Calu3 (cell line): ENCODE measurements at regions of chr6 and their contacts with region 1.

Region 1: DNA sequence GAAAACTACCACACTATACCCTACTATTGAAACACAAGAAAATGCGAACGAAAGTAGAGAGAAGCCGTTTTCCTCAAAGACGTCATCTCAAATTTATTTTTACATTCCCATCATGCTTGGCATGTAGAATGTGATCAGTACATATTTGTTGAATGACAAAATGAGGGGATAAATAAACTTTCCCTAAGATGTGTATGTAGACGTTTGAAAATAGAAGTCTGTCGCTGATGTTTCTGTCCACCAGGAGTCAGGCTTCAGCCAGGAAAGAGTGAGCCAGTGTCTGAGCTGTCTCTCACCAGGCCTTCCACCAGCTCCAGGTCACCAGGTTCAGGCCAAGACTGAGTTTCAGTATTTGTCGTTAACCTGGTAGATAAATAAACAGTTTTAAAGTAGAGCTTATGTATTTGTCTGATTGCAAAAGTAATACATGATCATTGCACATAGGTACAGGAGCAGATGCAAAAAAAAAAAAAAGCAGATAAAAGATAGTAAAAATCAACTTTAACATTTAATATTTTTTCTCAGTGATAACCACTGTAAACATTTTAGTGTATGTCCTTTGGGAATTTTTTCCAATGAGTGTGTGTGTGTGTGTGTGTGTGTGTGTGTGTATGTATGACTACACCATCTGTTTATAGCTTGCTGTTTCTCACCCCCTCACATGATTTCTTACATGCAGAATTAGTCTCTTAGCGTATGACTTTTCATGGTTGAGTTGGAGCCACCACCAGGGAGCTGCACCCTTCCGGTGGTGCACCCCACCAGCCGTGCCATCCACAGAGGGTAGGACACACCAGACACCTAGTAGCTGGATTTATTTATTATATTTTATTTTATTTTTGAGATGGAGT is 26.2 kb downstream of the WRNIP1 start:
- DNase-seq: peak; percentile 67
- H3K4me3 Mint-ChIP-seq: no peak overlapping the region
- H3K27ac Mint-ChIP-seq: peak overlapping the region; percentile 53
- H3K4me1 Mint-ChIP-seq: peaks cover 17% of the 10 kb centered on the region
- H3K27me3 Mint-ChIP-seq: no peaks in the 10 kb centered on the region
- CTCF ChIP-seq: peak; percentile 50

Region 2: GRCh38 chr6:2841264-2842138 is 50.2 kb after region 1 on chr6 and contains the start of gene SERPINB1:
- CTCF ChIA-PET with region 1: interaction called, 21 read pairs
- intact Hi-C with region 1: loop called (anchors 1 kb)
- DNase-seq: peak; percentile 87
- H3K4me3 Mint-ChIP-seq: peak within 1 kb of the TSS; percentile 91
- H3K27ac Mint-ChIP-seq: peak within 1 kb of the TSS; percentile 99
- H3K4me1 Mint-ChIP-seq: peaks cover 15% of the 10 kb centered on the region
- H3K27me3 Mint-ChIP-seq: no peaks in the 10 kb centered on the region
- CTCF ChIP-seq: no peak
- total RNA-seq, gene SERPINB1: 56.3 and 78.5 TPM in 2 replicates

Region 3: GRCh38 chr6:2846873-2847224 is 55.5 kb after region 1 on chr6:
- CTCF ChIA-PET with region 1: interaction called, 21 read pairs
- intact Hi-C with region 1: no loop called
- DNase-seq: no peak
- H3K4me3 Mint-ChIP-seq: peak overlapping the region; percentile 41
- H3K27ac Mint-ChIP-seq: peak overlapping the region; percentile 96
- H3K4me1 Mint-ChIP-seq: peaks cover 22% of the 10 kb centered on the region
- H3K27me3 Mint-ChIP-seq: no peaks in the 10 kb centered on the region
- CTCF ChIP-seq: no peak

Region 4: GRCh38 chr6:2911171-2911570 is 119.8 kb after region 1 on chr6:
- CTCF ChIA-PET with region 1: interaction called, 4 read pairs
- intact Hi-C with region 1: loop called (anchors 5 kb)
- DNase-seq: no peak
- H3K4me3 Mint-ChIP-seq: no peak overlapping the region
- H3K27ac Mint-ChIP-seq: no peak overlapping the region
- H3K4me1 Mint-ChIP-seq: peaks cover 20% of the 10 kb centered on the region
- H3K27me3 Mint-ChIP-seq: no peaks in the 10 kb centered on the region
- CTCF ChIP-seq: no peak

Region 5: GRCh38 chr6:2931970-2932748 is 140.8 kb after region 1 on chr6:
- CTCF ChIA-PET with region 1: interaction called, 9 read pairs
- intact Hi-C with region 1: loop called (anchors 5 kb)
- DNase-seq: peak; percentile 79
- H3K4me3 Mint-ChIP-seq: no peak overlapping the region
- H3K27ac Mint-ChIP-seq: no peak overlapping the region
- H3K4me1 Mint-ChIP-seq: peaks cover 9% of the 10 kb centered on the region
- H3K27me3 Mint-ChIP-seq: no peaks in the 10 kb centered on the region
- CTCF ChIP-seq: peak; percentile 76